ENCODE measurements at regions of chr13 and their contacts with region 1.

Region 1: GRCh38 chr13:73754727-73755292 is 379.4 kb downstream of the KLF12 start:
- DNase-seq: peak in 3 of 9 experiments; percentile 38 to 75 (median 66)
- ATAC-seq: peak; percentile 62
- H3K4me3 ChIP-seq: no peak overlapping the region
- H3K4me3 Mint-ChIP-seq: no peak overlapping the region
- H3K27ac ChIP-seq: peak overlapping the region in 1 of 2 experiments; percentile 16
- H3K27ac Mint-ChIP-seq: peak overlapping the region; percentile 84
- H3K4me1 ChIP-seq: peaks cover 43% of the 10 kb centered on the region
- H3K4me1 Mint-ChIP-seq: peaks cover 53% of the 10 kb centered on the region
- H3K27me3 ChIP-seq: no peaks in the 10 kb centered on the region
- H3K27me3 Mint-ChIP-seq: no peaks in the 10 kb centered on the region
- CTCF ChIP-seq: peak; percentile 97

Region 2: GRCh38 chr13:73228546-73228945 is 526.3 kb before region 1 on chr13:
- CTCF ChIA-PET with region 1: no interaction called
- POLR2A ChIA-PET with region 1: no interaction called
- intact Hi-C with region 1: no loop called
- DNase-seq: peak in 4 of 9 experiments; percentile 3 to 66 (median 23)
- ATAC-seq: peak; percentile 69
- H3K4me3 ChIP-seq: no peak overlapping the region
- H3K4me3 Mint-ChIP-seq: no peak overlapping the region
- H3K27ac ChIP-seq: peak overlapping the region in 1 of 2 experiments; percentile 18
- H3K27ac Mint-ChIP-seq: peak overlapping the region; percentile 60
- H3K4me1 ChIP-seq: peaks cover 42% of the 10 kb centered on the region
- H3K4me1 Mint-ChIP-seq: peaks cover 44% of the 10 kb centered on the region
- H3K27me3 ChIP-seq: no peaks in the 10 kb centered on the region
- H3K27me3 Mint-ChIP-seq: no peaks in the 10 kb centered on the region
- CTCF ChIP-seq: no peak

Region 3: DNA sequence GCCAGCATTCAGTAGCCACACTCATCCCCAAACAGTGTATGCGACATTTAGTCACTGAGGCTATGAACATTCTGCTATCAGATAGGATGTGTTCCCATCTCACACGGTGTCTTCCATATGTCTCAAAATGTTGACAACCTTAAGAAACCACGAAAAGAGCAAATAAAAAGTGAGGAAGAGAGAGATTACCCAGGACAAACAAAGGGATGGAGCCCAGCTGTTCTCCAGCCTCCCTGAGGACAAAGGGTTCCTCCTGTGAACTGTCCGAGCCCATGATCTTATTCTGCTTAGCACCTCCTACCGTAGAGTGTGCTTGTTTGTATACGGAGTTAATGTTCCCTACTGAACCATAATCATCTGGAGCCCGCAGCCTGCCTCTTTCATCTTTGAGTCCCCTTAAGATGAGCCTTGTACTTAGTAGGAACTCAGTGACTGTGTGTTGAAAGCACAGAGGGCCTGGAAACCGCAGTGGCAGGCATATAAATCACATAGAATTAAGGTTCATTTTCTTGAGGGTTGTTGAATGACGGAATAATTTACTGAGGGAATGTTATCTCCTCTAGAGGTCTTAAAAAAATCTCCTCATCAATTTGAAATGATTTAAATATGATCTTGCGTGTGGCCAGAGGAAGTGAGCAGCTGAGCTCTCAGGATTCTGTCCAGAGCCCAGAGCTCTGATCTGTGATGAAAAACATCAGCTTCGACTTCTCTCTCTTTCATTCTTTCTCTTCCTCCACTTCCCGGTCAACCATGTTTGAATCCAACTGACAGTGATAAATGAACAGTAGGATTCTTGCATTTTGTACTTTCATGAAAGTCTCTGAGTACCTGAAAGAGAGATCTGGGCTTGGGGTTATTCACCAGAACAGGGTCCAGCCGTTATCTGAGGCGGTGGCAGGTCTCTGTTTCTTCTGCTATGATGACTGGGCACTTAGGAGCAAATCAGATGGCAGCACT is 495.5 kb before region 1 on chr13:
- CTCF ChIA-PET with region 1: no interaction called
- POLR2A ChIA-PET with region 1: no interaction called
- intact Hi-C with region 1: no loop called
- DNase-seq: no peak
- ATAC-seq: no peak
- H3K4me3 ChIP-seq: no peak overlapping the region
- H3K4me3 Mint-ChIP-seq: no peak overlapping the region
- H3K27ac ChIP-seq: no peak overlapping the region
- H3K27ac Mint-ChIP-seq: no peak overlapping the region
- H3K4me1 ChIP-seq: no peaks in the 10 kb centered on the region
- H3K4me1 Mint-ChIP-seq: no peaks in the 10 kb centered on the region
- H3K27me3 ChIP-seq: no peaks in the 10 kb centered on the region
- H3K27me3 Mint-ChIP-seq: no peaks in the 10 kb centered on the region
- CTCF ChIP-seq: no peak

Region 4: GRCh38 chr13:73765651-73766384 is 11.0 kb after region 1 on chr13:
- CTCF ChIA-PET with region 1: interaction called, 35 read pairs
- POLR2A ChIA-PET with region 1: interaction called, 3 read pairs
- intact Hi-C with region 1: loop called (anchors 1 kb)
- DNase-seq: peak; percentile 65 to 94 (median 86)
- ATAC-seq: peak; percentile 89
- H3K4me3 ChIP-seq: peak overlapping the region; percentile 28 to 56
- H3K4me3 Mint-ChIP-seq: peak overlapping the region; percentile 81
- H3K27ac ChIP-seq: peak overlapping the region; percentile 73 to 86
- H3K27ac Mint-ChIP-seq: peak overlapping the region; percentile 98
- H3K4me1 ChIP-seq: peaks cover 77% of the 10 kb centered on the region
- H3K4me1 Mint-ChIP-seq: peaks cover 85% of the 10 kb centered on the region
- H3K27me3 ChIP-seq: no peaks in the 10 kb centered on the region
- H3K27me3 Mint-ChIP-seq: no peaks in the 10 kb centered on the region
- CTCF ChIP-seq: no peak

Region 5: GRCh38 chr13:73835138-73835721 is 80.4 kb after region 1 on chr13:
- CTCF ChIA-PET with region 1: interaction called, 6 read pairs
- POLR2A ChIA-PET with region 1: no interaction called
- intact Hi-C with region 1: loop called (anchors 2 to 5 kb)
- DNase-seq: peak in 2 of 9 experiments; percentile 56 to 69
- ATAC-seq: peak; percentile 69
- H3K4me3 ChIP-seq: no peak overlapping the region
- H3K4me3 Mint-ChIP-seq: no peak overlapping the region
- H3K27ac ChIP-seq: no peak overlapping the region
- H3K27ac Mint-ChIP-seq: no peak overlapping the region
- H3K4me1 ChIP-seq: peaks cover 23% of the 10 kb centered on the region
- H3K4me1 Mint-ChIP-seq: peaks cover 66% of the 10 kb centered on the region
- H3K27me3 ChIP-seq: no peaks in the 10 kb centered on the region
- H3K27me3 Mint-ChIP-seq: no peaks in the 10 kb centered on the region
- CTCF ChIP-seq: peak; percentile 90

Region 6: GRCh38 chr13:73998631-73999030 is 243.8 kb after region 1 on chr13:
- CTCF ChIA-PET with region 1: no interaction called
- POLR2A ChIA-PET with region 1: no interaction called
- intact Hi-C with region 1: loop called in 1 of 2 experiments (anchors 10 kb)
- DNase-seq: peak in 1 of 9 experiments; percentile 45
- ATAC-seq: peak; percentile 61
- H3K4me3 ChIP-seq: no peak overlapping the region
- H3K4me3 Mint-ChIP-seq: no peak overlapping the region
- H3K27ac ChIP-seq: no peak overlapping the region
- H3K27ac Mint-ChIP-seq: peak overlapping the region; percentile 34
- H3K4me1 ChIP-seq: peaks cover 18% of the 10 kb centered on the region
- H3K4me1 Mint-ChIP-seq: peaks cover 70% of the 10 kb centered on the region
- H3K27me3 ChIP-seq: no peaks in the 10 kb centered on the region
- H3K27me3 Mint-ChIP-seq: no peaks in the 10 kb centered on the region
- CTCF ChIP-seq: no peak

Measured in CD8-positive, alpha-beta T cell (primary cell).